ENCODE measurements at regions of chr17 and their contacts with region 1.

Region 1: GRCh38 chr17:60435244-60436167 is 13.2 kb downstream of the CHCT1 start:
- DNase-seq: peak; percentile 91
- H3K4me3 ChIP-seq: peak overlapping the region; percentile 61
- H3K27ac ChIP-seq: peak overlapping the region; percentile 78
- H3K4me1 ChIP-seq: peaks cover 9% of the 10 kb centered on the region
- H3K27me3 ChIP-seq: no peaks in the 10 kb centered on the region

Region 2: DNA sequence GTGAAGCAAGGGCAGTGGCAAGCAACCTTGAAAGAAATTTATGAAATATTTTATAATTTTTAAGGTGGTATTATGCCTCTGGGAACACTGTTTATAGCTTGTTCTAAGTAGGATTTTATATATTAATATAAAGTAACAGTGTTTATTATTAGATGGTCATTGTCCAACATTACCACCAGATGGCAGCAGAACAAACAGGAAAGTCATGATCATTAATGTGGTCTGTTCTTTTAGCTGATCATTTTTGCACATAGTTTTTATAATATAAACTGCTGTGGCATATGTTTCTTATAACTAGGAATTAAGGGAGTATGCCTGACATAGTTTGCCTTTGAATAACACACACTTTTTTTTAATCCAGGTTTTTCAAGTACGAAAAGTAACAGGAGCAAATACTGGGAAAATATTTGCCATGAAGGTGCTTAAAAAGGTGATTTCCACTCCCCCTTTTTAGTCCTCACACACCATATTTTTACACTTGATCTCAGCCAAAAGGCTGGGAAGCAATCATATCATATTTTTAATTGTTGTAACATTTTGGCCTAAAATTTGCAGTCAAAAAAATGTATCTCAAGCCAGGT is 521.1 kb before region 1 on chr17:
- in situ Hi-C with region 1: loop called (anchors 25 kb)
- DNase-seq: peak; percentile 68
- H3K4me3 ChIP-seq: no peak overlapping the region
- H3K27ac ChIP-seq: no peak overlapping the region
- H3K4me1 ChIP-seq: no peaks in the 10 kb centered on the region
- H3K27me3 ChIP-seq: no peaks in the 10 kb centered on the region

Region 3: GRCh38 chr17:60293580-60294335 is 141.7 kb before region 1 on chr17:
- in situ Hi-C with region 1: no loop called
- DNase-seq: no peak
- H3K4me3 ChIP-seq: no peak overlapping the region
- H3K27ac ChIP-seq: no peak overlapping the region
- H3K4me1 ChIP-seq: peaks cover 3% of the 10 kb centered on the region; the same call in 1 of the 2 replicates
- H3K27me3 ChIP-seq: no peaks in the 10 kb centered on the region

Region 4: DNA sequence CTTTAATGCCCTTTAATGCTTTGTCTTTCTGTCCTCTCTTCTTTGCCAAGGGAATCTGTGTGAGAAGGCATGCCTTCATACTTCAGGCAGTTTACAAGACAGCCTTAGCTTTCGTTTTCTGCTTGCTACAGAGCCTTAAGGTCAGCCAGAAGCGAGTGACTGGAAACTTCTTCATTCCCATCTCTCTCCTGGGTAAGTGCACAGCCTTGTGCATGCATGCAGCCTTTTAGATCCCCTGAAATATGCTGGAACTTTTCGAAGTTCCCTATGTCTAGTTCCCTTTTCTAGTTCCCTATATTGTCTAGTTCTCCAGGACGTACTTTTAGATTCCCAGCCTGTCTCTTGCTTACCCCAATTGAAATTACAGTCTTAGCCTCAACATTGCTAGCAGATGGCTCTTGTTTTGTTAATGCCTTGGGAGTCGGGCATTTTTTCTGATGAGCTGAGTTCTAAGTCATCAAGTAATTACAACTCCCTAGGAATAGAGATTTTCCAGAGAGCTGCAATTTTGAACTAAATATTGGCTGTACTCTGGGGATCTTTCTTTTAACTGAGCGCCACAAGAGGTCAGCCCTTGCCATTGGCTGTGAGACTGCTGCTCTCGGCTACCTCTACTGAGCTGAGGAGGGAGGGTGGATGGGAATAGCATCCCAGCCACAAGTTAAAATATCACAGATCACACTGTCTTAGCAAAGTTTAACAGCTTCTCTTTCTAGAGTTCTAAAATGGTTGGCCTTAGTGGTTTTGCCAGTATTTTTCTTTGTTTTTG is 141.8 kb after region 1 on chr17:
- in situ Hi-C with region 1: no loop called
- DNase-seq: peak; percentile 78
- H3K4me3 ChIP-seq: peak overlapping the region; percentile 76
- H3K27ac ChIP-seq: peak overlapping the region; percentile 49
- H3K4me1 ChIP-seq: peaks cover 16% of the 10 kb centered on the region
- H3K27me3 ChIP-seq: no peaks in the 10 kb centered on the region

Measured in GM23248 (cell line).